ENCODE measurements at regions of chr11 and their contacts with region 1.

Region 1: GRCh38 chr11:77187776-77188632 is 60.0 kb downstream of the MYO7A start:
- DNase-seq: peak; percentile 56
- H3K4me3 ChIP-seq: no peak overlapping the region
- H3K27ac ChIP-seq: no peak overlapping the region
- H3K4me1 ChIP-seq: peaks cover 14% of the 10 kb centered on the region
- H3K27me3 ChIP-seq: peaks cover 1% of the 10 kb centered on the region
- CTCF ChIP-seq: peak; percentile 89 to 98

Region 2: GRCh38 chr11:77047007-77047927 is 140.7 kb before region 1 on chr11:
- CTCF ChIA-PET with region 1: interaction called, 4 read pairs
- dilution Hi-C with region 1: no loop called
- in situ Hi-C with region 1: loop called in 1 of 2 experiments (anchors 10 kb)
- intact Hi-C with region 1: loop called (anchors 1 kb)
- DNase-seq: peak; percentile 89
- H3K4me3 ChIP-seq: peak overlapping the region; percentile 39 to 55 (median 40)
- H3K27ac ChIP-seq: peak overlapping the region; percentile 57
- H3K4me1 ChIP-seq: peaks cover 12% of the 10 kb centered on the region
- H3K27me3 ChIP-seq: no peaks in the 10 kb centered on the region
- CTCF ChIP-seq: peak; percentile 62 to 63

Region 3: DNA sequence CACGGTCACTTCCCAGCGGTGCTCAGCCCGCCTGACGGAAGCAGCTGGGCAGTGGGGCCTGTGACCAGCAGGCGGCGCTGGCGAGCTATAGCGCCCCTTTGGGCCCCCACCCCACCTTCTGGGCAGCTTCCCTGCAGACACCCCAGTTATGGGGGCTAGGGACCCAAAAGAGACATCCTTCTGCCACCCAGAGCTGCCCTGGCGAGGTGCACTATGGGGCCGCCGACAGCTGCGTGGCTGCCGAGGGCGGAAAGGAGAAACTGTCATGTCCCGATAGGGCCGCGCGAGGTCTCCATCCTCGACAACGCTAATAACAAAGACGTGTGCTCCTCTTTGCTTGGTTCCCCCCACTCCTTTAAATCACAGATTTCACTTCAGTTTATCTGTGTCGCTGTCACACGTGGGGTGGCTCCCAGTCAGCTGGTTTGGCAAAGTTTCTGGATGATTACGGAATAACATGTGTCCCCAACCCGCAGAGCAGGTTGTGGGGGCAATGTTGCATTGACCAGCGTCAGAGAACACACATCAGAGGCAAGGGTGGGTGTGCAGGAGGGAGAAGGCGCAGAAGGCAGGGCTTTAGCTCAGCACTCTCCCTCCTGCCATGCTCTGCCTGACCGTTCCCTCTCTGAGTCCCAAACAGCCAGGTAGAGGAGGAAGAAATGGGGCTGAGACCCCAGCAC is 60.6 kb before region 1 on chr11:
- CTCF ChIA-PET with region 1: interaction called, 5 read pairs
- dilution Hi-C with region 1: no loop called
- in situ Hi-C with region 1: loop called (anchors 5 to 10 kb)
- intact Hi-C with region 1: loop called (anchors 1 kb)
- DNase-seq: peak; percentile 16
- H3K4me3 ChIP-seq: peak overlapping the region; percentile 27 to 55 (median 40)
- H3K27ac ChIP-seq: no peak overlapping the region
- H3K4me1 ChIP-seq: peaks cover 8% of the 10 kb centered on the region
- H3K27me3 ChIP-seq: no peaks in the 10 kb centered on the region
- CTCF ChIP-seq: peak; percentile 88 to 99

Region 4: GRCh38 chr11:77309401-77310085 is 121.5 kb after region 1 on chr11:
- CTCF ChIA-PET with region 1: no interaction called
- dilution Hi-C with region 1: no loop called
- in situ Hi-C with region 1: no loop called
- intact Hi-C with region 1: loop called (anchors 10 kb)
- DNase-seq: no peak
- H3K4me3 ChIP-seq: no peak overlapping the region
- H3K27ac ChIP-seq: no peak overlapping the region
- H3K4me1 ChIP-seq: no peaks in the 10 kb centered on the region
- H3K27me3 ChIP-seq: no peaks in the 10 kb centered on the region
- CTCF ChIP-seq: no peak

Region 5: GRCh38 chr11:77377734-77378133 is 189.7 kb after region 1 on chr11:
- CTCF ChIA-PET with region 1: no interaction called
- dilution Hi-C with region 1: no loop called
- in situ Hi-C with region 1: no loop called
- intact Hi-C with region 1: loop called (anchors 5 kb)
- DNase-seq: no peak
- H3K4me3 ChIP-seq: no peak overlapping the region
- H3K27ac ChIP-seq: no peak overlapping the region
- H3K4me1 ChIP-seq: peaks cover 21% of the 10 kb centered on the region
- H3K27me3 ChIP-seq: no peaks in the 10 kb centered on the region
- CTCF ChIP-seq: no peak

Region 6: DNA sequence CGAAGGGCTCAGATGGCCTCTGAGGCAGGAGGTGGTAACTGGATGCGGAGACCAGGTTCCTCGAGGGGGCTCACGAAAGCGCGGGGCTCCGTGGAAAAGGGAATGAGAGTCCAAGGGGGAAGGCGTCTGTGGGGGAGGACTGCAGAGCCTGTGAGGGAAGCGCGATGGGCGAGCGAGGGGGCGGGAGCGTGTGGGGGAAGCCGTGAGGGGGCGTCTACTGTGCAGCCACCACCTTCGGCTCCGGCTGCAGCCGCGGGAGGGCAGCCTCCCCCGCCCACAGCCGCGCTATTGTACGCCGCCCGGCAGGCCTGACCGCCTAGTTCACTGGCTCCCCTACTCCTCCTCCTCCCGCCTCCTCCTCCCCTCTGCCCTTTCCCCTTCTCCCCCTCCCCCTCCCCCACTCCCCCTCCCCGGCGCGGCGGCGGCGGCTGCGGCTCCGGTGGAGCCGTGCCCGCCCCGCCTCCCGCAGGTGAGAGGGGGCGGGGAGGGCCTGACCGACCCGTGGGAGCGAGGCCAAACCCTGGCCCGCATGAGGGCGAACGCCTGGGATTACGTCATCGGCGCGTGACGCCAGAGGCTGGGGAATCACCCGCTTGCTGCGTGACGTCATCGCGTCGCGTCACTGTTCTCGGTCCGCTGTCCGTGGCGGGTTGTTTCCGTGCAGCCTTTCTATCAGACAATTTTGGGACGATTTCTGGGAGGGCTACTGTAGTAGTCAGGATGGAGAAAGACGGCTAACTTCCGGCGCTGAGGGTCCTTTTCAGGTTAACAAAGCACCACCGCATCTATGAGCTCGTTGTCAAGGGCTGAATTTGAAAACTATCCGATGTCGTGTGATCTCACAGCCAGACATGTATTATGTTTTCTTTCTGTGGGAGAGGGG is 286.0 kb after region 1 on chr11 and contains the start of gene PAK1:
- CTCF ChIA-PET with region 1: no interaction called
- dilution Hi-C with region 1: no loop called
- in situ Hi-C with region 1: no loop called
- intact Hi-C with region 1: loop called (anchors 1 kb)
- DNase-seq: peak; percentile 88
- H3K4me3 ChIP-seq: peak within 1 kb of the TSS; percentile 71 to 85 (median 80)
- H3K27ac ChIP-seq: peak within 1 kb of the TSS; percentile 11
- H3K4me1 ChIP-seq: peaks cover 20% of the 10 kb centered on the region
- H3K27me3 ChIP-seq: no peaks in the 10 kb centered on the region
- CTCF ChIP-seq: peak in 1 of 2 donors; percentile 46
- total RNA-seq, gene PAK1: 60.5 to 87.6 TPM

Region 7: GRCh38 chr11:77619576-77620198 is 431.7 kb after region 1 on chr11:
- CTCF ChIA-PET with region 1: no interaction called
- dilution Hi-C with region 1: no loop called
- in situ Hi-C with region 1: loop called (anchors 10 kb)
- intact Hi-C with region 1: loop called (anchors 1 kb)
- DNase-seq: peak; percentile 50
- H3K4me3 ChIP-seq: no peak overlapping the region
- H3K27ac ChIP-seq: no peak overlapping the region
- H3K4me1 ChIP-seq: no peaks in the 10 kb centered on the region
- H3K27me3 ChIP-seq: no peaks in the 10 kb centered on the region
- CTCF ChIP-seq: peak; percentile 72 to 76

Measured in mammary epithelial cell (primary cell).